ENCODE measurements at regions of chr6 and their contacts with region 1.

Region 1: GRCh38 chr6:10487668-10488327 is 33.4 kb upstream of the GCNT2 start:
- DNase-seq: no peak
- H3K4me3 ChIP-seq: no peak overlapping the region
- H3K27ac ChIP-seq: no peak overlapping the region
- H3K4me1 ChIP-seq: no peaks in the 10 kb centered on the region
- H3K27me3 ChIP-seq: no peaks in the 10 kb centered on the region
- CTCF ChIP-seq: no peak
- POLR2A ChIP-seq: no peak

Region 2: DNA sequence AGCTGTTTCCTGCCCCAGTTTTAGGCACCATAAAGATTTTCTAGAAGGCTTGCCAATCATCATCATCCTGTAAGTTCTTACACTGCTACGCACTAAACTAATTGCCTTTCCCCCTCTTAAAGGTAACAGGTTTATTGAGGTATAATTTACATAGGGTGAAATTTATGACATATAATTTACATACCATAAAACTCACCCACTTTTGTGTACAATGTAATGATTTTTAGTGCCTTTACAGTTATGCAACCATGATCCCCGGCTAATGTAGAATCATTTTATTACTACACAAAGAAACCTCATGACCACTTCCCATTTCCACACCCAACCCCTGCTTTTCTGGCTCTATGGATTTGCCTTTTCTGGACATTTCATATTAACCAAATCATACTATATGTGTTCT is 54.4 kb after region 1 on chr6:
- intact Hi-C with region 1: no loop called
- DNase-seq: no peak
- H3K4me3 ChIP-seq: no peak overlapping the region
- H3K27ac ChIP-seq: no peak overlapping the region
- H3K4me1 ChIP-seq: peaks cover 0 to under 1% (median 0%) of the 10 kb centered on the region in 3 donors
- H3K27me3 ChIP-seq: no peaks in the 10 kb centered on the region
- CTCF ChIP-seq: no peak
- POLR2A ChIP-seq: no peak

Region 3: GRCh38 chr6:10800829-10801535 is 313.2 kb after region 1 on chr6:
- intact Hi-C with region 1: loop called (anchors 10 kb)
- DNase-seq: no peak
- H3K4me3 ChIP-seq: no peak overlapping the region
- H3K27ac ChIP-seq: no peak overlapping the region
- H3K4me1 ChIP-seq: peaks cover 0 to 6% (median 0%) of the 10 kb centered on the region in 3 donors
- H3K27me3 ChIP-seq: no peaks in the 10 kb centered on the region
- CTCF ChIP-seq: peak; percentile 89 to 99 (median 94)
- POLR2A ChIP-seq: no peak